OCI-LY7 (cell line): ENCODE measurements at regions of chr7 and their contacts with region 1.

Region 1: GRCh38 chr7:47669061-47669891 is 87.4 kb upstream of the TNS3 start:
- DNase-seq: peak; percentile 91
- H3K4me3 ChIP-seq: peak overlapping the region; percentile 14
- H3K27ac ChIP-seq: peak overlapping the region; percentile 95
- H3K4me1 ChIP-seq: peaks cover 62% of the 10 kb centered on the region
- CTCF ChIP-seq: peak; percentile 27; the same call in 1 of the 2 replicates

Region 2: DNA sequence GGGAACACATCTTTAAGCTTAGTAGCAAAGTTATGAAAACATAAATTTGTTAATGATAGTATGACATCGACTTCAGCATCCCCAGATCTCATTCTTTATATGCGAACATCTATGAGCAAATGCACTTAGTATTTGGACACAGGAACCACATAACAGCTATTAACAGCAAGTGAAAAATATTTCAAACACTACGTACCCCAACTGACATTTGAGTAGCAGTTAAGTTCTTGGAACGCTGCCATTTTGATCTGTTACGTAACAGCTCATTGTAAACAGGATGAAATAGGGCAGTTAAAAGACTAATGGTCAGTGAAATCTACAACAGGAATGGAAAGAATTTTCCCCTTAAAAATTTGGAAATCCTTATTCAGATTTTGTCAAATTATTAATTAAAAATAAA is 516.2 kb before region 1 on chr7:
- CTCF ChIA-PET with region 1: no interaction called
- POLR2A ChIA-PET with region 1: interaction called, 6 read pairs
- intact Hi-C with region 1: loop called (anchors 10 kb)
- DNase-seq: peak; percentile 69
- H3K4me3 ChIP-seq: peak overlapping the region; percentile 63
- H3K27ac ChIP-seq: peak overlapping the region; percentile 98
- H3K4me1 ChIP-seq: peaks cover 91% of the 10 kb centered on the region
- CTCF ChIP-seq: no peak

Region 3: GRCh38 chr7:47497367-47498096 is 171.7 kb before region 1 on chr7:
- CTCF ChIA-PET with region 1: no interaction called
- POLR2A ChIA-PET with region 1: interaction called, 5 read pairs
- intact Hi-C with region 1: loop called (anchors 5 kb)
- DNase-seq: peak; percentile 87
- H3K4me3 ChIP-seq: peak overlapping the region; percentile 32
- H3K27ac ChIP-seq: peak overlapping the region; percentile 86
- H3K4me1 ChIP-seq: peaks cover 53% of the 10 kb centered on the region
- CTCF ChIP-seq: no peak

Region 4: GRCh38 chr7:47600199-47601118 is 68.8 kb before region 1 on chr7:
- CTCF ChIA-PET with region 1: no interaction called
- POLR2A ChIA-PET with region 1: interaction called, 11 read pairs
- intact Hi-C with region 1: loop called (anchors 1 kb)
- DNase-seq: peak; percentile 23
- H3K4me3 ChIP-seq: peak overlapping the region; percentile 41
- H3K27ac ChIP-seq: peak overlapping the region; percentile 86
- H3K4me1 ChIP-seq: peaks cover 36% of the 10 kb centered on the region
- CTCF ChIP-seq: no peak

Region 5: GRCh38 chr7:47685712-47686376 is 16.6 kb after region 1 on chr7:
- CTCF ChIA-PET with region 1: no interaction called
- POLR2A ChIA-PET with region 1: interaction called, 18 read pairs
- intact Hi-C with region 1: no loop called
- DNase-seq: no peak
- H3K4me3 ChIP-seq: no peak overlapping the region
- H3K27ac ChIP-seq: no peak overlapping the region
- H3K4me1 ChIP-seq: peaks cover 34% of the 10 kb centered on the region
- CTCF ChIP-seq: no peak

Region 6: GRCh38 chr7:47720141-47720906 is 51.0 kb after region 1 on chr7:
- CTCF ChIA-PET with region 1: no interaction called
- POLR2A ChIA-PET with region 1: interaction called, 10 read pairs
- intact Hi-C with region 1: loop called (anchors 1 kb)
- DNase-seq: peak; percentile 36
- H3K4me3 ChIP-seq: no peak overlapping the region
- H3K27ac ChIP-seq: no peak overlapping the region
- H3K4me1 ChIP-seq: peaks cover 75% of the 10 kb centered on the region
- CTCF ChIP-seq: no peak

Region 7: DNA sequence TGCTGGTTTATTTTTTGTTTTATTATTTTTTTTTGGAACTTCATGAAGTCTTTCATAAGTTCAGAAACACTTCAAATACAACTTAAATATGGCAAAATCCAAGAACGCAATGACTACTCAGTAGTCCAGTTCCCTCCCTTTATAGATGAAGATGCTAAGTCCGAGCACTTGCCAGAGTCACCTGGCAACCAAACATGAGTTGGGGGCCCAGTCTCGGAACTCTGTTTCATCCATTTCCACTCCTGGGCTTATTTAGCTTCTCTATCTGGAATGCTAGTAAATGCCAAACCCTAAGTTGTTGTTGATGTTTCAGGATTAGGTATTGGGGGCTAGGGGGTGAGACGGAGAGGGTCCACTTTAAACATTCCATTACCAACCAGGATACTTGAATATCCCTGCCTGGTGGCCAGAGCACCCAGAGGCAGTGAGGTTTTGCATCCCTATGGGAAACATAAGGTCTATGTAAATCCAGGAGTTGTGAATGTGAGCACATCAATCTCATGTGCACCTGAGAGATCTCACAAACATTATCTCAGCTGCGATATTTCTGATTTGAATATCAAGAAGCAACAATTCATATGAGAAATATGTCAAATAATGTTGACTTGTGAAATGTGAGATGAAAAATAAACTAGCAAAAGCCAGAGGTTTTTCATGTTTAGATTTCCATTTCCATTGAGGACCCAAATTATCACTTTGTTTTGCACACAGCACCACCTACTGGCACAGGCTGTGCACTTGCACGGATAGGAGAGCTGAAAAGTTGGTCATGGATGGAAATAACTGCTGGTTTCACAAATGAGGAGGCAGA is 149.7 kb after region 1 on chr7:
- CTCF ChIA-PET with region 1: no interaction called
- POLR2A ChIA-PET with region 1: interaction called, 3 read pairs
- intact Hi-C with region 1: loop called (anchors 2 kb)
- DNase-seq: peak; percentile 80
- H3K4me3 ChIP-seq: no peak overlapping the region
- H3K27ac ChIP-seq: no peak overlapping the region
- H3K4me1 ChIP-seq: peaks cover 9% of the 10 kb centered on the region
- CTCF ChIP-seq: peak; percentile 100